Calu3 (cell line): ENCODE measurements at regions of chr12 and their contacts with region 1.

Region 1: GRCh38 chr12:11885261-11886038 is 185.3 kb upstream of the BCL2L14 start:
- DNase-seq: peak; percentile 74
- H3K4me3 Mint-ChIP-seq: peak overlapping the region; percentile 29
- H3K27ac Mint-ChIP-seq: peak overlapping the region; percentile 69
- H3K4me1 Mint-ChIP-seq: peaks cover 70% of the 10 kb centered on the region
- H3K27me3 Mint-ChIP-seq: no peaks in the 10 kb centered on the region
- CTCF ChIP-seq: no peak

Region 2: DNA sequence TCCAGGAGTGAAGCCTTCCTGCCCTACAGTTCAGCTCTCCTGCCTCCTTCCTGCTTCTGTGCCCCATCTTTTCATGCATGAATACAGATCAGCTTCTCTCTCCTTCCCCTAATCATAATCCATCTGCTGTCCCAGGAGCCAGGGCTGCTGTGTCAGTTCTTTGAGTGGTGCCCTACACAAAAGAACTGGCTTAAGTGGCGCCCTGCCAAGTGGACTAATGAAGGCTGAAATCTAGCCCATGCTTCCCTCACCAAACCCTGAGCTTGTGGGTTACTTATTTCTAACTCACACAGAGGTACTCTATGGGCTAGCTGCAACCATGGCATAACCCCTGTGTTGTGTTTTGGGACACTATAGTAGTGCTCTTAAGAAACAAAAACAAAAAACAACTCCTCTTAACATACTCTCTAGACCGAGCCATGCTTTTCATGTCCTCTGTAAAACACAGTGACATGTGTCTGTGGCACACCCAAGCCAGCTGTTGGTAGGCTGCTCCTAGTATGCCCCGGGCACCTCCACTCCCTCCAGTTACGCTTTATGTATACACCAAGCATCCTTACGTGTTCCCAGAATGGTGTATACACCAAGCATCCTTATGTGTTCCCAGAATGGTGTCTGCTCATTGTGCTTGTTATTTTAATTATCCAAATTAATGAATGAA is 255.3 kb before region 1 on chr12:
- CTCF ChIA-PET with region 1: no interaction called
- intact Hi-C with region 1: loop called (anchors 5 kb)
- DNase-seq: peak; percentile 32
- H3K4me3 Mint-ChIP-seq: no peak overlapping the region
- H3K27ac Mint-ChIP-seq: no peak overlapping the region
- H3K4me1 Mint-ChIP-seq: peaks cover 44% of the 10 kb centered on the region
- H3K27me3 Mint-ChIP-seq: no peaks in the 10 kb centered on the region
- CTCF ChIP-seq: no peak

Region 3: DNA sequence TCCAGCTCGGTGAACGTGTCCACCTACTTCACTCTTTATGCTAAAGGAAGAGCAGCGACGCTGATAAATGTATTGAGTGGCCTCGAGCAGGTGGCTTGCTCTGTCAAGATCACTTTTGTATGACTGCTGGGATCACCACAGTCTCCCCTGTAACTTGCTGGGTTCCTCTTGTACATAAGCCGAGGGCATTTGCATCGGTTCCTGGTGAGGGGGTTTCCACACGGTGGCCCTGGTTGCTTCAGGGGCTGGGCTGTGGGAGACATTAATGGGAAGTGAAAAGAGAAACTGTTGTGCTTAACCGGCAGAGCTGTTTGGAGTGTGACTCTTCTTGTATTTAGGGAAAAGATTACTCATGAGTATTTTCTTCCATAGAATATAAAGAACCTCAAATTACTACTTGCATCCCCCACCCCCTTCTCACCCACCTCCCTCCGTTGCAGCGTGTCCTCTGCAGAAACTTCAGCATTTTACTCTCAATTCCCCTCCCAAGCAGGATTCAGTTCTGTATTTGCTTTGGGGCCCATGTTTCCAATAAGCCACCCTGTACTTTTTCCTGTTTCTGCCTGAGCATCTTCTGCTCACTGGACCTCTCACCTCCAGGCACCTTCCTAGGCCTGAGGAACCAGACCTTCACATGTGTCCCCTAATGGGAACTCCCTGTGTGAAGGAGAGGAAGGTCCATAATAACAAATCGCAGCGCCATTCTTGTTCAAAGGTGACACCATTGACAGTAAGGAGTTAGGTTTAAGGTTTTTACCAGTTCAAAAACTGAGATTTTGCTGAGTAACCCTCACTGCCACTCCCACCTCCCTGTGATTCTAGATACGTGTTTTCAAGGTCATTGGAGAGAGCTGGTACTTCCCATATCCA is 48.9 kb before region 1 on chr12:
- CTCF ChIA-PET with region 1: no interaction called
- intact Hi-C with region 1: loop called (anchors 2 kb)
- DNase-seq: no peak
- H3K4me3 Mint-ChIP-seq: no peak overlapping the region
- H3K27ac Mint-ChIP-seq: no peak overlapping the region
- H3K4me1 Mint-ChIP-seq: peaks cover 86% of the 10 kb centered on the region
- H3K27me3 Mint-ChIP-seq: no peaks in the 10 kb centered on the region
- CTCF ChIP-seq: no peak

Region 4: DNA sequence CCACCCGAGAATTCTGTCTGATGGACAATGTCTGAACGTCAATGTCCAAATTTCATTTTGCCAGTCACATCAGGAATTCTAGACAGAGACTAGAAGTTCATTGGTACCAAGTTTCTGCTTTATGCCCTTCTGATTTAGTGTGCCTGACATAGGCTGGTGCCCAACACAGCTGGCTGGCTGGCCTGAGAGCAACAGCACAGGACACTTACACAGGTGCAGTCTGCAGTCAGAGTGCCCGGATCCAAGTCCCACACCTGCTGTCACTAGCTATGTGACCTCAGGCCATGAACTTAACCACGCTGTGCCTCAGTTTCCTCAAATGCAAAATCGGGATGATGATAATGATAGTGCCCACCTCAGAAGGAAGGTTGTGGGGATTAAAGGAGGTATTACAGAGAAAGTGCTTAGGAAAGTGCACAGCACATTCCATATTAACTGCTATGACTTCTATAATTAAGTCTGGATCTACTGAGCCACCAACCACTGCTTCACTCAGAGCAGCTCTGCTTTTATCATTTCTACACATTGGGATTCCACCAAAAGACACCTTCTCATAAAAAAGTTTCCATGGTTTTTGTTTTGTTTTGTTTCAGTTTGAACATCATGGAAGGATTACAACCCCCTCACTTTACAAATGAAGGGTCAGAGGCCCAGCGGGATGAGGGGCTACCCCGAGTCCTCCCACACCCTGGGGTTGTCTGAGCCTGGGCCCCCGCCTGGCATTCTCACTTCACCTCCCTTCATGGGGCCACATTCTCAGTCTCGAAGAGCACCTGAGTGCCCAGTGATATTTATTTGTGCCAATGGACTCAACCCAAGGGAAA is 16.5 kb after region 1 on chr12:
- CTCF ChIA-PET with region 1: no interaction called
- intact Hi-C with region 1: no loop called
- DNase-seq: no peak
- H3K4me3 Mint-ChIP-seq: no peak overlapping the region
- H3K27ac Mint-ChIP-seq: no peak overlapping the region
- H3K4me1 Mint-ChIP-seq: no peaks in the 10 kb centered on the region
- H3K27me3 Mint-ChIP-seq: no peaks in the 10 kb centered on the region
- CTCF ChIP-seq: no peak

Region 5: DNA sequence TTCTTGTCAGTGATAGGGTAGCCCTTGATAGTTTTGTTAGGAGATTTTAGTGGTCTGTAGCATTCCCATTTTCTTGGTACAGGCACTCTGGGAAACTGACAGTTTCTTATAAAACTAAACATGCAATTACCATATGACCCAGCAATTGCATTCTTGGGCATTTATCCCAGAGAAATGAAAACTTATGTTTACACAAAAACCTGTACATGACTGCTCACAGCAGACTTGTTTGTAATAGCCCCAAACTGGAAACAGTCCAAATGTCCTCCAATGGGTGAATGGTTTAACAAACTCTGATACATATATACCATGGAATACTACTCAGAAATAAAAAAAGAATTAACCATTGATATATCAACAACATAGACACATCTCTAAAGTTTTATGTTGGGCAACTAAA is 546.9 kb after region 1 on chr12:
- CTCF ChIA-PET with region 1: no interaction called
- intact Hi-C with region 1: no loop called
- DNase-seq: peak; percentile 20
- H3K4me3 Mint-ChIP-seq: no peak overlapping the region
- H3K27ac Mint-ChIP-seq: no peak overlapping the region
- H3K4me1 Mint-ChIP-seq: peaks cover 14% of the 10 kb centered on the region
- H3K27me3 Mint-ChIP-seq: no peaks in the 10 kb centered on the region
- CTCF ChIP-seq: no peak